Activated CD4-positive, alpha-beta memory T cell treated with anti-CD3 and anti-CD28 coated beads for 36 hours (primary cell): ENCODE measurements at regions of chr18 and their contacts with region 1.

Region 1: DNA sequence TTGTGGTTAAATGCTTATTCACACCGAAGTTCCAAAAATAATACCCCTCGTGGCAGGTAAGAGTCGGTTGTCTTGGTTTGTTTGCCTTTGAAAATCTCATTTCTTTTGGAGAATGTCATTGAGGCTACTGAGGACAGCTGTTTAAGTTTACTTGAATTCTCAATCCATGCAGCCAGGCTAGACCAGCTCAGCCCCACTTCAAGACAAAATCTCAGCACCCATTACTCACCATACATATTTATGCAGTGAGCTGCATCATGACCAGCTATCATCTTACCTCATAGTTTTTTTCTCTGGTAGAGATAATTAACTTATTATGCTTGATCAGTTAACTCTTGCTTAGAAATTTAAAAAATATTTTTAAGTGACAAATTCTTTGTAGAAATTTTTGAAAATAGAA is 115.9 kb downstream of the HAUS1 start:
- DNase-seq: no peak
- H3K4me3 Mint-ChIP-seq: no peak overlapping the region
- H3K27ac Mint-ChIP-seq: no peak overlapping the region
- H3K4me1 Mint-ChIP-seq: peaks cover 82% of the 10 kb centered on the region
- H3K27me3 Mint-ChIP-seq: no peaks in the 10 kb centered on the region

Region 2: GRCh38 chr18:46264235-46264893 is 44.2 kb after region 1 on chr18:
- CTCF ChIA-PET with region 1: no interaction called
- POLR2A ChIA-PET with region 1: interaction called, 3 read pairs
- intact Hi-C with region 1: loop called (anchors 5 kb)
- DNase-seq: no peak
- H3K4me3 Mint-ChIP-seq: no peak overlapping the region
- H3K27ac Mint-ChIP-seq: no peak overlapping the region
- H3K4me1 Mint-ChIP-seq: peaks cover 57% of the 10 kb centered on the region
- H3K27me3 Mint-ChIP-seq: no peaks in the 10 kb centered on the region